ENCODE measurements at regions of chr20 and their contacts with region 1.

Region 1: GRCh38 chr20:13119583-13119982 is 101.5 kb upstream of the ISM1 start:
- DNase-seq: peak; percentile 43
- H3K4me3 Mint-ChIP-seq: no peak overlapping the region
- H3K27ac Mint-ChIP-seq: no peak overlapping the region
- H3K4me1 Mint-ChIP-seq: no peaks in the 10 kb centered on the region
- H3K27me3 Mint-ChIP-seq: no peaks in the 10 kb centered on the region

Region 2: DNA sequence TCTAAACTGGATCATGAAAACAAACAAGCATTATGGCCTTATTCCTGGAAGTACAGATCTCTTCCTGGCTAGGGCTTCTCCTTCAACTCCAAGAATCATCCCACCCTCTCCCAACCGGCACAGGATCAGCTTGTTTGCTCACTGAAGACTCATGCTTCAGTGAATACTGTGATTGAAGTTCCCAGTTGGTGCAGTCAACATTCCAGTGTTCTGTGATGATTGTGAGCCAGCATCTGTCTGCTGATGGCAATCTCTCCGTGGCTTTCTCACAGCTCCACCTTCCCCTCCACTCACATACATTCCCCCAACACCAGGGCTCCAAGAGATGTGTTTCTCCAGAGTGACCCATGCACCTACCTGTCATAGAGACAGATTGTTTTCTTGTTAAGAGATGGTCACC is 1623.2 kb before region 1 on chr20:
- CTCF ChIA-PET with region 1: no interaction called
- intact Hi-C with region 1: no loop called
- DNase-seq: no peak
- H3K4me3 Mint-ChIP-seq: no peak overlapping the region
- H3K27ac Mint-ChIP-seq: no peak overlapping the region
- H3K4me1 Mint-ChIP-seq: no peaks in the 10 kb centered on the region
- H3K27me3 Mint-ChIP-seq: no peaks in the 10 kb centered on the region

Region 3: GRCh38 chr20:13041574-13042457 is 77.8 kb before region 1 on chr20:
- CTCF ChIA-PET with region 1: no interaction called
- intact Hi-C with region 1: no loop called
- DNase-seq: no peak
- H3K4me3 Mint-ChIP-seq: no peak overlapping the region
- H3K27ac Mint-ChIP-seq: no peak overlapping the region
- H3K4me1 Mint-ChIP-seq: no peaks in the 10 kb centered on the region
- H3K27me3 Mint-ChIP-seq: peaks cover 3% of the 10 kb centered on the region

Region 4: DNA sequence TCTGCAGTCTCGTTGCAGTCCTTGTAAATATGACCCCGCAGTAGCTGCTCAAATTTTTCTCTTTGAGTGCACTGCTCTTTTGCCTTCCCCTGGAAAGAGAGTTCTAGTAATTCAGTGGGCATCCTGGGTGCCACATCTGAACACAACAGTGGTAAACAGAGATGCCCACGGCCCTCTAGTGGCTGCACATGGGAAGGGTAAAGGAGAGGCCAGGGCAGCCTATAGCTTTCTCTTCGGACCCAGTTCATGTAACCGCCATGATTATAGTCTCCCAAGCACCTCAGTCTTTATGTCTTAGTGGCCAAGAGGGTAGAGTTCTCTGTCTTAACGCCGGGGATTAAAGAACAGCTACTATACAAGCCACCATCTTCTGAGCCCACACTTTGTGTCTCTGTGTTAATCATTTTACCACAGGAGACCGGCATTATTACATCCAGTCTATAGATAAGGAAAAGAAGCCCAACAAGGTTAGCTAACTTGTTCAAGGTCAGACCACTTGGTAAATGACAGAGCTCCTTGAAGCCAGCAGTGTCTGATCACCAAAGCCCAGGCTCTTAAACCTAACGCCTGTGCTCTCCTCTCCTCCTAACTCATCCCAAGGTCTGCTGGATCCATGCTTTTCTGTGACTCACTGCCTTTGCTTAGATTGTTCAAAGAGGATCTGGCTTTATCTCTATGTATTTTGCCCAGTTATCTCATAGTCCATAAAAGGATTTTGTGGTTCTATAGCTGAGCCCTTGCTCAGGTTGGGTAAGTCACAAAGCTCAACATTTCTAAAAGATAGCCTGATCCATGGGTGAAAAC is 183.3 kb after region 1 on chr20:
- CTCF ChIA-PET with region 1: interaction called, 45 read pairs
- intact Hi-C with region 1: loop called (anchors 1 kb)
- DNase-seq: peak; percentile 67
- H3K4me3 Mint-ChIP-seq: no peak overlapping the region
- H3K27ac Mint-ChIP-seq: no peak overlapping the region
- H3K4me1 Mint-ChIP-seq: no peaks in the 10 kb centered on the region
- H3K27me3 Mint-ChIP-seq: no peaks in the 10 kb centered on the region

Region 5: GRCh38 chr20:13771853-13772453 is 652.4 kb after region 1 on chr20:
- CTCF ChIA-PET with region 1: no interaction called
- intact Hi-C with region 1: loop called (anchors 5 kb)
- DNase-seq: no peak
- H3K4me3 Mint-ChIP-seq: no peak overlapping the region
- H3K27ac Mint-ChIP-seq: no peak overlapping the region
- H3K4me1 Mint-ChIP-seq: peaks cover 18% of the 10 kb centered on the region
- H3K27me3 Mint-ChIP-seq: no peaks in the 10 kb centered on the region

Region 6: GRCh38 chr20:14055127-14055742 is 935.7 kb after region 1 on chr20:
- CTCF ChIA-PET with region 1: no interaction called
- intact Hi-C with region 1: loop called (anchors 1 kb)
- DNase-seq: peak; percentile 23
- H3K4me3 Mint-ChIP-seq: no peak overlapping the region
- H3K27ac Mint-ChIP-seq: no peak overlapping the region
- H3K4me1 Mint-ChIP-seq: no peaks in the 10 kb centered on the region
- H3K27me3 Mint-ChIP-seq: peaks cover 2% of the 10 kb centered on the region